Adrenal gland (tissue), 19 donors: ENCODE measurements at regions of chr14 and their contacts with region 1.

Region 1: DNA sequence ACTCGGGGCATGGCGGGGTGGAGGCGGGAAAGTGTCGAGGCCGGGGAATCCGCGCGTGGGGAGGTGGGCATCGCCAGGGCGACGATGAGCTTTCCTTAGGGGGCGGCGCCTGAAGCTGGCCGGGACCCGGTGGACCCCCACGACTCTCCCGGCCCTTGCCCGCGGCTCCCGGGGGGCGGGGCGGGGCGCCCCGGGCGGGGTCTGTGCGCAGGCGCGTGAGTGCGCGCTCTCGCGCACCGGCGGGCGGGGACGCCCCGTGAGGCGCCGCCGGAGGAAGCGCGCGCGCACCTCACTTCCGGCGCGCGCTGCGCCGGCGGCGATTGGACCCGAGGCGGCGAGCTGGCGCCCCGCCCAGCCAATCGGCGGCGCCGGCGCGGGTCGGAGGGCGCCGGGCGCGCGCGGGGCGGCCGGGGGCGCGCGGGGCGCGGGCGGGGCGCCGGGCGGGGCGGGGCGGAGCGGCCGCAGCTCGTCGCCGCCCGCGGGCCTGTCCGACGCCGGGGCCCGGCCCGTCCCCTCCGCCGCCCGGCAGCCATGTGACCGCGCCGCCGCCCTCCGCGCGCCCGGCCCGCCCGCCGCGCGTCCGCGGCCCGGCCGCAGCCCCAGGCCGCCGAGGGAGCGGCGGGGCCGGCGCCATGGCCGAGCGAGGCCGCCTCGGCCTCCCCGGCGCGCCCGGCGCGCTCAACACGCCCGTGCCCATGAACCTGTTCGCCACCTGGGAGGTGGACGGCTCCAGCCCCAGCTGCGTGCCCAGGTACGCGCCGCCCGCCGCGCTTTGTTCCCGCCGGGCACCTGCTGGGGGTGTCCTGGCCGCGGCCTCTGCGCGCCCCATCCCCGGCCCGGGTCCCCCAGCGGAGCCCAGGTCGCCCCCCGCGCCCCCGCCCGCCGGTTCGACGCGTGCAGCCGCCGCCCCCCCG is at the start of gene PACS2:
- DNase-seq: peak; percentile 67 to 84 (median 69)
- H3K4me3 ChIP-seq: peak within 1 kb of the TSS; percentile 11 to 97 (median 52)
- H3K27ac ChIP-seq: peak within 1 kb of the TSS in 4 of 5 donors; percentile 76 to 94 (median 88)
- H3K4me1 ChIP-seq: peaks cover 27 to 38% of the 10 kb centered on the region in 2 donors
- H3K27me3 ChIP-seq: no peaks in the 10 kb centered on the region
- CTCF ChIP-seq: no peak
- POLR2A ChIP-seq: peak in 1 of 2 donors; percentile 16
- total RNA-seq, gene PACS2: 19.5 to 112 (median 71.5) TPM

Region 2: GRCh38 chr14:105351920-105352851 is 37.6 kb after region 1 on chr14:
- intact Hi-C with region 1: loop called in 1 of 2 experiments (anchors 5 kb)
- DNase-seq: peak; percentile 88 to 97 (median 89)
- H3K4me3 ChIP-seq: no peak overlapping the region
- H3K27ac ChIP-seq: peak overlapping the region in 1 of 5 donors; percentile 52
- H3K4me1 ChIP-seq: peaks cover 0 to 5% of the 10 kb centered on the region in 2 donors
- H3K27me3 ChIP-seq: no peaks in the 10 kb centered on the region
- CTCF ChIP-seq: peak; percentile 77 to 97 (median 91)
- POLR2A ChIP-seq: no peak